Activated T-helper 2 cell treated with anti-CD3 and anti-CD28 coated beads, Interferon-gamma antibody, Interleukin-2, Interleukin-4, amounts not matched to agents 10 μg/mL and 5 μg/mL and 100 μg/mL, durations not matched to agents 14 hours and 24 hours and 36 hours (primary cell): ENCODE measurements at regions of chr6 and their contacts with region 1.

Region 1: DNA sequence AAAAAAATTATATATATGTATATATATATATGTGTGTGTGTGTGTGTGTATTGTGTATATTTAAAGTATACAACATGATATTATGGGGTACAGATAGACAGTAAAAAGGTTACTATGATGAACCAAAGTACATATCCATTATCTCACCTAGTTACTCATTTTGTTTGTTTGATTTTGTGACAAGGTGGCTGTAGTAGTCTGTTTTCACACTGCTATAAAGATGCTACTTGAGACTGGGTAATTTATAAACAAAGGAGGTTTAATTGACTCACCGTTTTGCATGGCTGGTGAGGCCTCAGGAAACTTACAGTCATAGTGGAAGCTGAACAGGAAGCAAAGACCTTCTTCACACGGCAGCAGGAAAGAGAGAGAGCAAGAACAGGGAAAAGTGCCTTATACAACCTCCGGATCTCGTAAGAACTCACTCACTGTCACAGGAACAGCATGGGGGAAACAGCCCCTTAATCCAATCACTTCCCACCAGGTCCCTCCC is 30.2 kb upstream of the DACT2 start:
- DNase-seq: no peak
- H3K4me3 Mint-ChIP-seq: no peak overlapping the region
- H3K27ac Mint-ChIP-seq: peak overlapping the region; percentile 30
- H3K4me1 Mint-ChIP-seq: peaks cover 14% of the 10 kb centered on the region
- H3K27me3 Mint-ChIP-seq: peaks cover 7% of the 10 kb centered on the region

Region 2: DNA sequence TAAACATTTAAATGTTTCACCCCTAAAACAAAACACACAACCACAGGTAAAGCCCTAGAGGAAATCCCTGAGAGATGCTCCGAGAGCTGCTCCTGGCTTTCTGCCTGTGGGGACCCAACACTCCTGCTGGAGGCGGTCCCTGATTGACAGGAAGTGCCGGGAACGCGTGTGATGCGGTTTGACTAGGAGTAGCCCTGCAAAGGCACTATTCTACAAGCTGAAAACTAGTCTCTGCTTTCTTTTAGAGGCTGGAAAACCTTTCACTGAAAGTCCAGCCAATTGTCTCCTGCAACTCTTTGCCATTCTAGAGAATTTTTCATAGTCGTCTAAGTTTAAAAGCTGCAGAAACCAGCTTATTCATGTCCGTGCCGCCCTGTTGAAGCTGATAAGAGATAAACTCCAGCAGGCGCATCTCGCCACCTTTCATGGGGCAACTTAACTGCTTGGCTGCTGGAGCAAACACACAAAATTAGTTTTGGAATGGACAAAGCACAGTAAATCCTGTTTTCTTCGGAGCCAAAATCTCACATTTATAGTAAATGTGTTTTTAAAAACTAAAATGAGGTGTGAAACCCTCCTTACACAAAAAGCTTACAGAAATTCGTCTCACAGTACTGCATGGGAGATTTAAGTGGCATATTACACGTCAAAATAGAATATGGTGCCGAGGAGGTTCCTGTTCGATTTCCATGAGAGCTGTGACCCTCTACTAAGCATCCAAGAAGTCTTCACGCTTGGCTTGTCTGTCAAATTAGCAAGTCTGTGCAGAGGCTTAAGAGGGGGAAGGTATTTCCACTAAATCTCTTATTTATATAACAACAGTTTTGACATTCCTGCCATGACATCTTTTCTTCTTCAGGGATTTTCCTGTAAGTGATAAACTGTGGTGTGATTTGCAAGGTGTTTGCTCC is 77.1 kb before region 1 on chr6:
- intact Hi-C with region 1: no loop called
- DNase-seq: no peak
- H3K4me3 Mint-ChIP-seq: no peak overlapping the region
- H3K27ac Mint-ChIP-seq: no peak overlapping the region
- H3K4me1 Mint-ChIP-seq: no peaks in the 10 kb centered on the region
- H3K27me3 Mint-ChIP-seq: peaks cover 11% of the 10 kb centered on the region

Region 3: DNA sequence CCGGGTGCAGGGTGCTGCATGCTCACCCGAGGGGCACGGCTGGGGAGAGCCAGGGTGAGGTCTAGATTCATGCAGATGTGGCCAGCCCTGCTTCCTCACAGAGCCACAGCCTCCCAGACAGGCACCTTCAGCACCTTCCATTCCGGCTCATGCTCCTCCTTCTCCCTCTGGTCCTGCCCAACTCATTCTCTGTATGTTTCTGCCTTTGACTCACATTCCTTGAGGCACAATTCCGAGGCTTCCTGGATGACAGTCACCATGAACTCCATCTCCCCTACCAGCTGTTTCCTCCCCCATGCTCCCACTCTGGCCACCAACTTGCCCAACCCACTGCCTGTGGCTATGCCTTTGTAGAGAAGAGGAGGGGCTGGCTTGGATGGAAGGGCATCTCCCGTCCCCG is 65.5 kb before region 1 on chr6:
- intact Hi-C with region 1: loop called (anchors 1 kb)
- DNase-seq: no peak
- H3K4me3 Mint-ChIP-seq: no peak overlapping the region
- H3K27ac Mint-ChIP-seq: no peak overlapping the region
- H3K4me1 Mint-ChIP-seq: peaks cover 20% of the 10 kb centered on the region
- H3K27me3 Mint-ChIP-seq: no peaks in the 10 kb centered on the region

Region 4: GRCh38 chr6:168367285-168367751 is 17.6 kb after region 1 on chr6:
- intact Hi-C with region 1: no loop called
- DNase-seq: no peak
- H3K4me3 Mint-ChIP-seq: no peak overlapping the region
- H3K27ac Mint-ChIP-seq: no peak overlapping the region
- H3K4me1 Mint-ChIP-seq: no peaks in the 10 kb centered on the region
- H3K27me3 Mint-ChIP-seq: peaks cover 9% of the 10 kb centered on the region